A673 (cell line): ENCODE measurements at regions of chr12 and their contacts with region 1.

Region 1: GRCh38 chr12:104215638-104216297 is at the start of gene TXNRD1:
- DNase-seq: peak; percentile 89
- H3K4me3 ChIP-seq: peak within 1 kb of the TSS; percentile 42
- H3K27ac ChIP-seq: peak within 1 kb of the TSS; percentile 53
- H3K4me1 ChIP-seq: peaks cover 22% of the 10 kb centered on the region
- H3K27me3 ChIP-seq: no peaks in the 10 kb centered on the region
- CTCF ChIP-seq: peak; percentile 84
- total RNA-seq, gene TXNRD1: 196 and 226 TPM in 2 replicates

Region 2: DNA sequence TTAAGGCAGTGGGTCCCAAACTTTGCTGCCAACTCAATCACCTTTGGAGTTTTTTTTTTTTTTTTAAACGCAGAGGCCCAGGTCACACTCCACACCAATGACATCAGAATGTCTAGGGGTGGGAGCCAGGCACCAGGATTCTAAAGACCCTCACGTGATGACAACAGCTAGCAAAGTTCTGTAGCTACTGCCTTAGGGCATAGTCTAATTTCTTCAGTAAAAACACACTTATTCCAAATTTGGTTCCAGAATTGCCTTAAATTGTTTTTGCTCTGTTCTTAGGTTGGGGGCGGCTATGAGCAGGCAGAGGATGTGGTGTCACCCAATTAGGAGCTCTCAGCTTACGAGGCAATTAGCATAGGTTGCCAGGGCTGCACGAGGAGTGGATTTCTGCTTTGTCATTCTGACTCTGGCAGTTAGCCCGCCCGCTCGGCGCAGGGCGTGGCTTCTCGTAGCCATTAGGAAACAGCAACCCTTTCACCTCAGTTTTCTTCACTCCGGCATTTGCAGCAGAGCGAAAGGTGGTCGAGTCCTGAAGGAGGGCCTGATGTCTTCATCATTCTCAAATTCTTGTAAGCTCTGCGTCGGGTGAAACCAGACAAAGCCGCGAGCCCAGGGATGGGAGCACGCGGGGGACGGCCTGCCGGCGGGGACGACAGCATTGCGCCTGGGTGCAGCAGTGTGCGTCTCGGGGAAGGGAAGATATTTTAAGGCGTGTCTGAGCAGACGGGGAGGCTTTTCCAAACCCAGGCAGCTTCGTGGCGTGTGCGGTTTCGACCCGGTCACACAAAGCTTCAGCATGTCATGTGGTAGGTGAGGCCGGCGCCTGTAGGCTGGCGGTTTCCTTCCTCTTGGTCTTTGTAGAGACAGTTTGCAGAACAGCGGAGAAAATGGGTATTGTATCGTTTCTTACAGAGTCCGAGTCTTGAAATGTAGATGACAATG is 71.0 kb after region 1 on chr12:
- CTCF ChIA-PET with region 1: interaction called, 10 read pairs
- POLR2A ChIA-PET with region 1: no interaction called
- intact Hi-C with region 1: loop called (anchors 2 kb)
- DNase-seq: peak; percentile 97
- H3K4me3 ChIP-seq: peak overlapping the region; percentile 80
- H3K27ac ChIP-seq: peak overlapping the region; percentile 95
- H3K4me1 ChIP-seq: peaks cover 22% of the 10 kb centered on the region
- H3K27me3 ChIP-seq: no peaks in the 10 kb centered on the region
- CTCF ChIP-seq: no peak

Region 3: GRCh38 chr12:104291867-104292524 is 76.2 kb after region 1 on chr12:
- CTCF ChIA-PET with region 1: interaction called, 10 read pairs
- POLR2A ChIA-PET with region 1: no interaction called
- intact Hi-C with region 1: loop called (anchors 2 kb)
- DNase-seq: peak; percentile 54
- H3K4me3 ChIP-seq: no peak overlapping the region
- H3K27ac ChIP-seq: no peak overlapping the region
- H3K4me1 ChIP-seq: peaks cover 20% of the 10 kb centered on the region
- H3K27me3 ChIP-seq: no peaks in the 10 kb centered on the region
- CTCF ChIP-seq: no peak

Region 4: DNA sequence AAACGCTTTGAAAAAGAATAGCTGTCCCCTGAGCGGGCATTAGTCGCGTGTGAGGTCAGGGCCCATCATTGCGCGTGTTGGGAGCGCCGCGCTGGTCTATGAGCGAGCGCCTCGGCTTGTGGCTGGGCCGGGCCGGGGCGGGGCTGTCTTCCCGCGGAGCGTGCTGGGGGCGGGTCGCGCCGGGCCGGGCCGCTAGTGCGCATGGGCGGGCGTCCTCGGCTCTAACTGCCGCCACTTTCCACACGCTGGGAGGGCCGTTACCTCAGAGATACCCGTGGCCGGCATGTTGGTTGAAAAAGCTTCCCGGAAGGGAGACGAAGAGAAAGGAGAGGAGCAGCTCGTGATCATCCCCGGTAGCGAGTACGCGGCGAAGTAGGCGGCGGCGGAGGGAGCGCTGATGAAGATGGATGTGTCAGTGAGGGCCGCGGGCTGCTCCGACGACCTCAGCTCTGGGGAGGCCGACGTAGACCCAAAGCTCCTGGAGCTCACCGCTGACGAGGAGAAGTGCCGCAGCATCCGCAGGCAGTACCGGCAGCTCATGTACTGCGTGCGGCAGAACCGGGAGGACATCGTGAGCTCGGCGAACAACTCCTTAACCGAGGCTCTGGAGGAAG is 87.9 kb after region 1 on chr12 and contains the start of gene EID3:
- CTCF ChIA-PET with region 1: no interaction called
- POLR2A ChIA-PET with region 1: no interaction called
- intact Hi-C with region 1: loop called (anchors 5 kb)
- DNase-seq: peak; percentile 62
- H3K4me3 ChIP-seq: peak within 1 kb of the TSS; percentile 15
- H3K27ac ChIP-seq: peak within 1 kb of the TSS; percentile 15
- H3K4me1 ChIP-seq: peaks cover 59% of the 10 kb centered on the region
- H3K27me3 ChIP-seq: no peaks in the 10 kb centered on the region
- CTCF ChIP-seq: no peak
- total RNA-seq, gene EID3: 3.0 and 5.4 TPM in 2 replicates

Region 5: DNA sequence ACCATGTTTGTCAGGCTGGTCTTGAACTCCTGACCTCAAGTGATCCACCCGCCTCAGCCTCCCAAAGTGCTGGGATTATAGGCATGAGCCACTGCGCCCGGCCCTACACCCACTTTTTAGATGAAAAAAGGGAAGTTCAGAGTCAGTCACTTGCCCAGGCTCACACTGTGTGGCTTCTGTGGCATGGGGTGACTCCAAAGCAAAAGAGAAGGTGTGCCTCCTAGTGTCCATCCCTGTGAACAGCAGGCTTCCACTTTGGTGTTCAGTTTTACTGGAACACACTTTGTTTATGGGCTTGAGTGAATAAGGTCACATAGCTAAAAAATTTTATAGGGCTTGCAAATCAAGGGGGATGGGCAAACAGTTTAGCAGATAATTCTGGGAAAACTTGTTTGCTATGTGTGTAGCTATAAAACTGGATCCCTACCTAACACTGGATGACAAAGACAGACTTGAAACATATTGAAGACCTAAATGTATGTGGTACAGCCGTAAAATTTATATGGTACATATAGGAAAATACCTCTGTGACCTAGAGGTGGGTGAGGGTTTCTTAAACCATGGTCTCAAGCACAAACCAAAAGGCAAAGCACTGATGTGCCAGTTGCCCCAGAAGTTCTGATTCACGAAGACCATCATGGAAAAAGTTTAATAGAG is 142.7 kb after region 1 on chr12:
- CTCF ChIA-PET with region 1: no interaction called
- POLR2A ChIA-PET with region 1: no interaction called
- intact Hi-C with region 1: loop called (anchors 2 kb)
- DNase-seq: peak; percentile 69
- H3K4me3 ChIP-seq: no peak overlapping the region
- H3K27ac ChIP-seq: no peak overlapping the region
- H3K4me1 ChIP-seq: no peaks in the 10 kb centered on the region
- H3K27me3 ChIP-seq: no peaks in the 10 kb centered on the region
- CTCF ChIP-seq: peak; percentile 77

Region 6: GRCh38 chr12:104478396-104479122 is 262.8 kb after region 1 on chr12:
- CTCF ChIA-PET with region 1: no interaction called
- POLR2A ChIA-PET with region 1: no interaction called
- intact Hi-C with region 1: no loop called
- DNase-seq: no peak
- H3K4me3 ChIP-seq: no peak overlapping the region
- H3K27ac ChIP-seq: no peak overlapping the region
- H3K4me1 ChIP-seq: no peaks in the 10 kb centered on the region
- H3K27me3 ChIP-seq: no peaks in the 10 kb centered on the region
- CTCF ChIP-seq: no peak